AG04449 (cell line): ENCODE measurements at regions of chr14 and their contacts with region 1.

Region 1: GRCh38 chr14:67666750-67667449 is 7.5 kb downstream of the VTI1B start:
- DNase-seq: no peak
- H3K4me3 ChIP-seq: no peak overlapping the region
- CTCF ChIP-seq: peak; percentile 61

Region 2: DNA sequence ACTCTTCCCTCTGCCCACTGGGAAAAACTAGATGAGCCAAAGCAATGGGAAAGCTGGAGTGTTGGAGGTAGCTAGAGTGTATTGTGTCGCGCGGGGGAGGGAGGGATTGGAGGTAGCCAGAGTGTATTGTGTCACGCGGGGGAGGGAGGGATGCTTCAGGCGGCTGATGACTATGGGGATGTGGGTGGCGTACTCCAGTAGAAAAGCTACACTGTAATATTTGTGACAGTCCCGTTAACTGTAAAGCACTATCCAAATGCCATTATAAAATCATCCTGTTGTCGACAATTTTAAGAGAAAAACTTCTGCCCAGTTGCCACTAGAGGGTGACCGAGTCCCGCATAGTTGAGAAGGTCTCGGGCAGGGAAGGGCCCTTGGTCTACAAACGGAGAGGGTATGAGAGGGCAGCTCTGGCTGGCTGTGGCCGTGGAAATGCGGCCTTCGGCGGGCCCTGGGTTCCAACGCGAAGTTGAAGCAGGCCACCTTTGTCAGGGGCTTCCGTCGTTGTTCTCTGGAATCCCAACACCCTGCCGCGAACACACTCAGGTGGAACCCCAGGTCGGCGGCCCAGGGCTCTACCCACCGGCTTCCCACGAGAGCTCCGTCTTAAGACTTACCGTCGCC is 239.8 kb before region 1 on chr14:
- CTCF ChIA-PET with region 1: interaction called, 35 read pairs
- POLR2A ChIA-PET with region 1: no interaction called
- DNase-seq: no peak
- H3K4me3 ChIP-seq: no peak overlapping the region
- CTCF ChIP-seq: peak; percentile 78

Region 3: GRCh38 chr14:67526676-67527459 is 140.0 kb before region 1 on chr14:
- CTCF ChIA-PET with region 1: interaction called, 15 read pairs
- POLR2A ChIA-PET with region 1: no interaction called
- DNase-seq: no peak
- H3K4me3 ChIP-seq: no peak overlapping the region
- CTCF ChIP-seq: peak; percentile 45

Region 4: GRCh38 chr14:67599698-67600561 is 67.0 kb before region 1 on chr14 and contains the start of gene PIGH:
- CTCF ChIA-PET with region 1: interaction called, 46 read pairs
- POLR2A ChIA-PET with region 1: no interaction called
- DNase-seq: no peak
- H3K4me3 ChIP-seq: peak within 1 kb of the TSS; percentile 86
- CTCF ChIP-seq: peak; percentile 69

Region 5: GRCh38 chr14:67610491-67610890 is 56.4 kb before region 1 on chr14:
- CTCF ChIA-PET with region 1: interaction called, 72 read pairs
- POLR2A ChIA-PET with region 1: no interaction called
- DNase-seq: no peak
- H3K4me3 ChIP-seq: no peak overlapping the region
- CTCF ChIP-seq: no peak

Region 6: DNA sequence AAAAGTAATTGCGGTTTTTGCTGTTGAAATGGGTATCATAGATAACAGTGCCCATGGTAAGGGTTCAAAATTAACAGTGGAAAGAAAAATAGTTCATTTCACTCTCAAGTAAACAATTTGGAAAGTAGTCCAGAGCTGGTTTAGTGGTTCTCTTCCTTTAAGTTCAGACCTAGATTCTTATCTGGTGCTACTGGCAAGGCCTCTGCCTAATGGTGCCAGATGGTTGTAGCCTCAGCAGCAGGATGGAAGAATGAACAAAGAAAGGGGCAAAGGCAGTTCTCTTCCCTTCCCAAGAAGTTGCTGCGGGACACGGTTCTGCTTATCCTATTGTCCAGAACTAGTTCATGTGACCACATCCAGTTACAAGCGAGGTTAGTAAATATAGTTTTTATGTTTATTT is 36.7 kb before region 1 on chr14:
- CTCF ChIA-PET with region 1: interaction called, 269 read pairs
- POLR2A ChIA-PET with region 1: no interaction called
- DNase-seq: no peak
- H3K4me3 ChIP-seq: no peak overlapping the region
- CTCF ChIP-seq: no peak

Region 7: DNA sequence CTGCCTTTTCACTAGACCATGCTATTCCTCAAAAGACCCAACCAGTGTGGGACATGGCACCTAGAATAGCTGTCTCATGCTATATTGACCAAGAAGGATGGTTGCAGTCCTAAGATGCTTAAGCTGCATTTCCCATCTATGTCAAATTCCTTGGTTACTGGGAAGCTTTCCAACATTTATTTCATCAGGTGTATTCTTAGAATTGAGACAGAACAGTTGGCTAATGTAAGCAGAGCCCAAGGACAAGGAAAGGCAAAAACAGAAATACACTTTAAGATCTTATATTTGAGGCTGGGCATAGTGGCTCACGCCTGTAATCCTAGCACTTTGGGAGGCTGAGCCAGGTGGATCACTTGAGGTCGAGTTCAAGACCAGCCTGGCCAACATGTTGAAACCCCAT is 22.5 kb before region 1 on chr14:
- CTCF ChIA-PET with region 1: interaction called, 12 read pairs
- POLR2A ChIA-PET with region 1: no interaction called
- DNase-seq: no peak
- H3K4me3 ChIP-seq: no peak overlapping the region
- CTCF ChIP-seq: no peak